ENCODE measurements at regions of chr12 and their contacts with region 1.

Region 1: DNA sequence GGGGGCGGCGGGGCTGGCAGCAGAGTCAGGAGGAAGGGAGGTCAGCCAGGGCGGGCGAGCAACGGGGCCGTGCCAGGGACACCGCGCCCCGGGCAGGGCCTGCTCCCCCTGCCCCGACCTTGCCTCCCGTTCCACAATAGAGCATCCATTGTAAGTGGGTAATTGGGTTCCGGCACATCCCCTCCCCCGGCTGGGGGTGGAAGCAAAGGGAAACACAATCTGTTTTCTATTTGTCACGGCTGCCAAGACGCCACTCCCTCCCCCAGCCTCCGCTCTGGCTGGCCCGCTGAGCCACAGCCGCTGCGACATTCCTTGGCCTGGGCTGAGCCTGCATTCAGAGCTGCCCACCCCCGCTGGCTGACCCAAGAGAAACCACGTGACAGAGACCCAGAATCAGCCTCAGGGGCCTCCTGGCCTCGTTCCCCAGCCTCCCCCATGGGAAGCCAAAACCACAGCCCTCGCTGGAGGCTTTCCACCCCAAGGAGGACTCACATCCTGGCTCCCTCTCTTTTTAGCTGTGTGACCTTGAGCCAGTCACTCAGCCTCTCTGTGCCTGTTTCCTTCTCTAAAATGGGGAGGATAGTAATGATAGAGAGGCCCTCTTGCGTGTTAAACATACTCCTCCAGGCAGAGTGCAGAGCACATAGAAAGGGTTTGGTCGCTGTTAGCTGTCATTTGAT is 117.6 kb downstream of the SCARB1 start:
- DNase-seq: peak; percentile 97 to 98 (median 98)
- ATAC-seq: peak; percentile 96
- H3K4me3 ChIP-seq: no peak overlapping the region
- H3K27ac ChIP-seq: peak overlapping the region; percentile 67
- H3K4me1 ChIP-seq: peaks cover 7% of the 10 kb centered on the region
- H3K27me3 ChIP-seq: no peaks in the 10 kb centered on the region

Region 2: DNA sequence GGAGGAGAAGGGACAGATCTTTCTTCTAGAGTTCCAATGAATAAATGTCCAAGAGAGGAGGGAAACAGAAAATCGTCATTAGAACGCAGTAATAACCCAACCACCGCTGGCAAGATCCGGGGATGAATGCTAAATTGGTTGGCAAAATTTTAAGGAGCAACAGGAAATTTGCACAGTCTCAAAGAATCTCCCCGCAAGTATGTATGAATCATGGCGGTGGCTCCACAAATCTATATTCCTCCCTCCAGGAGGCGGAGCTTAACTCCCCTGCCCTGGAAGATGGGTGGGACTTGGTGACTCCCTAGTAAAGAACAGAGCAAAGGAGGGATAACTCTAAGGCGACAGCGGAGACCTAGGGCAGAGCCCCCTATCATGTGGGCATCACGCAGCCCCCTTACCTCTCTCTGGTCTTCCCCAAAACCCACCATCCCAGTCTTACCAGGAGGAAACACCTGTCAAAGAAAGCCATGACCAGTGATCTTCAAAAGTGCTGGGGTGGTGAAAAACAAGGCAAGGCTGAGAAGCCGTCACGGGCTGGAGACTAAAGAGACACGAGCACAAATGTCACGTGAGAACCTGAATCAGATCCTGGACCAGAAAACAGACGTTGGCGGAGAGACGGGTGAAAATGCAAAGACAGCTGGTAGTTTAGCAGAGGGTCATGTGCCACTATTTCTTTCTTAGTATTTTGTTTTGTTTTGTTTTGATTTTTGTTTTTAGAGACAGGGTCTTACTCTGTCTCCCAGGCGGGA is 304.4 kb before region 1 on chr12:
- intact Hi-C with region 1: no loop called
- DNase-seq: peak in 2 of 3 donors; percentile 45 to 56
- ATAC-seq: peak; percentile 40 to 68
- H3K4me3 ChIP-seq: no peak overlapping the region
- H3K27ac ChIP-seq: peak overlapping the region; percentile 68
- H3K4me1 ChIP-seq: peaks cover 13% of the 10 kb centered on the region
- H3K27me3 ChIP-seq: no peaks in the 10 kb centered on the region

Region 3: GRCh38 chr12:124625867-124626675 is 120.0 kb before region 1 on chr12:
- intact Hi-C with region 1: no loop called
- DNase-seq: peak; percentile 95 to 96 (median 96)
- ATAC-seq: peak; percentile 93 to 97
- H3K4me3 ChIP-seq: no peak overlapping the region
- H3K27ac ChIP-seq: peak overlapping the region; percentile 94
- H3K4me1 ChIP-seq: peaks cover 13% of the 10 kb centered on the region
- H3K27me3 ChIP-seq: no peaks in the 10 kb centered on the region

Region 4: GRCh38 chr12:124700810-124701592 is 45.0 kb before region 1 on chr12:
- intact Hi-C with region 1: loop called in 1 of 4 experiments (anchors 5 kb)
- DNase-seq: peak; percentile 74 to 88 (median 86)
- ATAC-seq: peak; percentile 50 to 67
- H3K4me3 ChIP-seq: no peak overlapping the region
- H3K27ac ChIP-seq: peak overlapping the region; percentile 63
- H3K4me1 ChIP-seq: no peaks in the 10 kb centered on the region
- H3K27me3 ChIP-seq: no peaks in the 10 kb centered on the region

Measured in right cardiac atrium (tissue), 5 donors.